ENCODE measurements at regions of chr1 and their contacts with region 1.

Region 1: GRCh38 chr1:25037174-25038074 is 107.3 kb upstream of the RUNX3 start:
- DNase-seq: peak in 2 of 3 donors; percentile 74 to 75
- H3K4me3 ChIP-seq: no peak overlapping the region
- H3K27ac ChIP-seq: no peak overlapping the region
- H3K4me1 ChIP-seq: peaks cover 16 to 57% (median 54%) of the 10 kb centered on the region in 4 experiments
- H3K27me3 ChIP-seq: no peaks in the 10 kb centered on the region

Region 2: GRCh38 chr1:24930204-24931145 is 106.9 kb before region 1 on chr1 and contains the start of gene RUNX3:
- CTCF ChIA-PET with region 1: interaction called, 24 read pairs
- POLR2A ChIA-PET with region 1: interaction called, 19 read pairs
- DNase-seq: peak; percentile 89 to 94 (median 93)
- H3K4me3 ChIP-seq: peak within 1 kb of the TSS; percentile 76 to 95 (median 85)
- H3K27ac ChIP-seq: peak within 1 kb of the TSS; percentile 72 to 84
- H3K4me1 ChIP-seq: peaks cover 6 to 71% (median 46%) of the 10 kb centered on the region in 4 experiments
- H3K27me3 ChIP-seq: no peaks in the 10 kb centered on the region

Region 3: DNA sequence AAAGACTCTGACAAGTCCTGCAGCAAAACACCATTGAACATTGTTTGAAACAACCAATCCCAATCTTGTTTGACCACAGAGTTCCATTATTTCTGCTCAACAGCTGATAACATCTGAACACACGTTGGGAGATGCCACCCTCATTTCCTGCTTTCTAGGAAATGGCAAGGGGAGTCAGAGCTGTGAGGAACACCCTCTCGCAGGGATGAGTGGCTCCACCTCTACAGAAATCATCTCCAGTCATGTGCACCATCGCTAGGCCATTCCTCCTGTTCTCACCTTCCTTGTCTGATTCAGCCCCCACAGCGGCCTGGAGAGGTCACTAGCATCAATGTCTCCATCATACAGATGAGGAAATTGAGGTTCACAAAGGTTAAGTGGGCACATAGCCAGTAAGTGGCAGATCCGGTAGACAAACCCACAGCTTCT is 85.0 kb before region 1 on chr1:
- CTCF ChIA-PET with region 1: interaction called, 19 read pairs
- POLR2A ChIA-PET with region 1: interaction called, 3 read pairs
- DNase-seq: peak in 2 of 3 donors; percentile 29 to 30
- H3K4me3 ChIP-seq: no peak overlapping the region
- H3K27ac ChIP-seq: no peak overlapping the region
- H3K4me1 ChIP-seq: peaks cover 4 to 93% (median 45%) of the 10 kb centered on the region in 4 experiments
- H3K27me3 ChIP-seq: no peaks in the 10 kb centered on the region

Region 4: GRCh38 chr1:25006770-25007169 is 30.7 kb before region 1 on chr1:
- CTCF ChIA-PET with region 1: interaction called, 14 read pairs
- POLR2A ChIA-PET with region 1: no interaction called
- DNase-seq: no peak
- H3K4me3 ChIP-seq: no peak overlapping the region
- H3K27ac ChIP-seq: no peak overlapping the region
- H3K4me1 ChIP-seq: peaks cover 0 to 52% (median 12%) of the 10 kb centered on the region in 4 experiments
- H3K27me3 ChIP-seq: no peaks in the 10 kb centered on the region

Region 5: GRCh38 chr1:25022361-25023189 is 14.8 kb before region 1 on chr1:
- CTCF ChIA-PET with region 1: interaction called, 40 read pairs
- POLR2A ChIA-PET with region 1: interaction called, 114 read pairs
- DNase-seq: peak; percentile 99
- H3K4me3 ChIP-seq: peak overlapping the region in 4 of 7 experiments; percentile 4 to 57 (median 34)
- H3K27ac ChIP-seq: peak overlapping the region; percentile 97 to 98
- H3K4me1 ChIP-seq: peaks cover 15 to 95% (median 91%) of the 10 kb centered on the region in 4 experiments
- H3K27me3 ChIP-seq: no peaks in the 10 kb centered on the region

Region 6: GRCh38 chr1:25140073-25140797 is 102.8 kb after region 1 on chr1:
- CTCF ChIA-PET with region 1: no interaction called
- POLR2A ChIA-PET with region 1: no interaction called
- DNase-seq: peak in 2 of 3 donors; percentile 67 to 72
- H3K4me3 ChIP-seq: no peak overlapping the region
- H3K27ac ChIP-seq: no peak overlapping the region
- H3K4me1 ChIP-seq: peaks cover 0 to 30% (median under 1%) of the 10 kb centered on the region in 4 experiments
- H3K27me3 ChIP-seq: no peaks in the 10 kb centered on the region